GM10248 (cell line): ENCODE measurements at regions of chr2 and their contacts with region 1.

Region 1: GRCh38 chr2:60998628-60999545 is 18.6 kb upstream of the PEX13 start:
- DNase-seq: peak; percentile 54
- CTCF ChIP-seq: peak; percentile 49

Region 2: GRCh38 chr2:60707750-60708371 is 291.0 kb before region 1 on chr2:
- CTCF ChIA-PET with region 1: interaction called, 132 read pairs
- POLR2A ChIA-PET with region 1: no interaction called
- DNase-seq: peak; percentile 66
- CTCF ChIP-seq: peak; percentile 54

Region 3: DNA sequence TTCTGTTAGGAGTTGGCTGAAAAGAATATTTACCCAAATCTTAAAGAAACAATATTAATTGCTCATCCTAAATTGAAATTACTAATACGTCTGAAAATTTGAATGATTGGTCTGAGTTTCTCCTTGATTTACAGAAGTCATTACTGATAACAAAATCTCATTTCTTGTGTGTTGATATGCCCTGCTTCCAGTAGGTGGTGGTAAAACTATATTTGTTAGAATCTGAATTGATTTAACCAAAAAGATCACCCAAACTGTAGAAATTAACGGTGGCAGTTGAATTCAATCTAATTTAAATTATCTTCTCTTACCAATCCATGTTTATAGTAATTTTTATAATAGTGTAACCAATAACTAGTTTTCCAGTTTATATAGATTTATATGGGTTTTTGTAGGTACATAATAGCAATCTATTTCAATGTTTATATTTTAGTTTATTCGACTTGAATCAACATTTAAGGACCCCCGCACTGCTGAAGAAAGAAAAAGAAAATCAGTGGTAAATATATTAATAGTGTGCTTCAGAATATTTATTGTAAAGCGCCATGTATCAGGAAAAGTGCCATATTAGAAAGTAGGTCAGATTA is 204.5 kb before region 1 on chr2:
- CTCF ChIA-PET with region 1: interaction called, 24 read pairs
- POLR2A ChIA-PET with region 1: no interaction called
- DNase-seq: peak; percentile 45
- CTCF ChIP-seq: peak; percentile 51

Region 4: DNA sequence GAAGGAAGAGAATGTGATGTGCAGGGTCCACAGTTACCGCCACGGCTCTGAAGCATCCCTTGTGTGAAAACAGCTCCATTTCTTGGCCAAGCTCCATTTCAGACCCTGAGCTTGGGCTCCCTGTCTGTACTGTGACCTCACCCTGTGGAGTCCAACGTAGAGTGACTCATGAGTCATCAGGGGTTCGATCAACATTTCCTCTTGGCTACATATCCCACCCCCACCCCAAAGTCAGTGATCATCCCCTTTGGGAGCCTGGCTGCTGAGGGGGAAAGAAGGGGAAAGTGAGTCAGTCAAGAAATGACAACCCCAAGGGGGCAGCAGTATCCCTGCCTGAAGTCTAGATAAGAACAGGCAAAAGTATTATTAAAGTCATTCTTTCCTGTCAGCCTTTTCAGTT is 180.6 kb before region 1 on chr2:
- CTCF ChIA-PET with region 1: interaction called, 32 read pairs
- POLR2A ChIA-PET with region 1: no interaction called
- DNase-seq: no peak
- CTCF ChIP-seq: peak; percentile 17

Region 5: GRCh38 chr2:60972889-60973656 is 25.8 kb before region 1 on chr2:
- CTCF ChIA-PET with region 1: interaction called, 22 read pairs
- POLR2A ChIA-PET with region 1: no interaction called
- DNase-seq: no peak
- CTCF ChIP-seq: no peak